ENCODE measurements at regions of chr1 and their contacts with region 1.

Region 1: DNA sequence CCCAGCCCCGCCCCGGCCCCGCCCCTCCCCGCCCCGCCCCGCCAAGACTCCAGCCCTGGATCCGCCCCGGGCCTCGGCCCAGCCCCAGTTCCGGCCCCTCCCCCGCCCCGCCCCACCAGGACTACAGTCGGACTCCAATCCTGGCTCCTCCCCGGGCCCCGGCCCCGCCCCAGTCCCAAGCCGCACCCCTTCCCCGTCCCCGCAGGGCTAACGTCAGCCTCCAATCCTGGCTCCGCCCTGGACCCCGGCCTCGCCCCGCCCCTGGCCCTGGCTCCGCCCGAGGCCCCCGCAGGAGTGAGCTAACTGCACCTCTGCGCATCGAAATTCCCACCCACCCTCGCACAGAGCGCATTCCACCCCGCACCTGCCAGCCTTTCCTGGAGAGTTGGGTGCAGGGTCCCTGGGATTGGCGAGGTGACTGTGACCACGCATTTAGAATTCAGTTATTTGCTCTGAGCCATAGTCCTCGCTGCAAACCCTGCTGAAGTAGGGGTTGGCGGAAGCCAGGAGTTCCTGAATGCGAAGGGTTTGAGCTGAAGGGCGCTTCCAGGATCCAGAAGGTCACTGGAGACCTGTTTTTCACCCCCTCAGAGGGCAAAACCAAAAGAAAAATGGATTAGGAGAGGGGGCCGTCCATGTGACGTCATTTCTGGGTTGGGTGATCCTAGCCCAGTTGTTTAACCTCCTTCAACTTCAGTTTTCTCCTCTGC is 588 bp upstream of the IGSF8 start:
- DNase-seq: peak; percentile 98
- H3K4me3 Mint-ChIP-seq: peak overlapping the region; percentile 86
- H3K27ac Mint-ChIP-seq: peak overlapping the region; percentile 76
- H3K4me1 Mint-ChIP-seq: peaks cover 38% of the 10 kb centered on the region
- H3K27me3 Mint-ChIP-seq: peaks cover 13% of the 10 kb centered on the region
- CTCF ChIP-seq: no peak

Region 2: DNA sequence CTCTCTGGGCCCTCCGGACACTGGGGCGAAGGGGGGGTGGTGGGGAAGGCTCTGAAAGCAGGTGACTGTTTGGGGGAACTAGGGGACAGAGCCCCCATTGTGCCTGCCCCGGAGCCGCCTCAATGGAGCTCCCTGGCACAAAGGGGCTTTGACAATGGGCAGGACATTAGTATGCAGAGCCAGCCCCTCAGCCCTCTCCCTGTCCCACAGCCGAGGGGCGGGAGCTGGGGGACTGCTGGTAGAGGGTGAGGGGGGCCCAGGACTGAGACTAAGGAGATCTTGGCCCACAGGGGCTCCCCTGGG is 36.8 kb before region 1 on chr1:
- CTCF ChIA-PET with region 1: no interaction called
- intact Hi-C with region 1: no loop called
- DNase-seq: no peak
- H3K4me3 Mint-ChIP-seq: no peak overlapping the region
- H3K27ac Mint-ChIP-seq: no peak overlapping the region
- H3K4me1 Mint-ChIP-seq: no peaks in the 10 kb centered on the region
- H3K27me3 Mint-ChIP-seq: peaks cover 62% of the 10 kb centered on the region
- CTCF ChIP-seq: no peak

Region 3: GRCh38 chr1:160078512-160079195 is 20.4 kb before region 1 on chr1:
- CTCF ChIA-PET with region 1: interaction called, 10 read pairs
- intact Hi-C with region 1: no loop called
- DNase-seq: peak; percentile 75
- H3K4me3 Mint-ChIP-seq: no peak overlapping the region
- H3K27ac Mint-ChIP-seq: no peak overlapping the region
- H3K4me1 Mint-ChIP-seq: peaks cover 9% of the 10 kb centered on the region
- H3K27me3 Mint-ChIP-seq: peaks cover 98% of the 10 kb centered on the region
- CTCF ChIP-seq: peak; percentile 93

Region 4: DNA sequence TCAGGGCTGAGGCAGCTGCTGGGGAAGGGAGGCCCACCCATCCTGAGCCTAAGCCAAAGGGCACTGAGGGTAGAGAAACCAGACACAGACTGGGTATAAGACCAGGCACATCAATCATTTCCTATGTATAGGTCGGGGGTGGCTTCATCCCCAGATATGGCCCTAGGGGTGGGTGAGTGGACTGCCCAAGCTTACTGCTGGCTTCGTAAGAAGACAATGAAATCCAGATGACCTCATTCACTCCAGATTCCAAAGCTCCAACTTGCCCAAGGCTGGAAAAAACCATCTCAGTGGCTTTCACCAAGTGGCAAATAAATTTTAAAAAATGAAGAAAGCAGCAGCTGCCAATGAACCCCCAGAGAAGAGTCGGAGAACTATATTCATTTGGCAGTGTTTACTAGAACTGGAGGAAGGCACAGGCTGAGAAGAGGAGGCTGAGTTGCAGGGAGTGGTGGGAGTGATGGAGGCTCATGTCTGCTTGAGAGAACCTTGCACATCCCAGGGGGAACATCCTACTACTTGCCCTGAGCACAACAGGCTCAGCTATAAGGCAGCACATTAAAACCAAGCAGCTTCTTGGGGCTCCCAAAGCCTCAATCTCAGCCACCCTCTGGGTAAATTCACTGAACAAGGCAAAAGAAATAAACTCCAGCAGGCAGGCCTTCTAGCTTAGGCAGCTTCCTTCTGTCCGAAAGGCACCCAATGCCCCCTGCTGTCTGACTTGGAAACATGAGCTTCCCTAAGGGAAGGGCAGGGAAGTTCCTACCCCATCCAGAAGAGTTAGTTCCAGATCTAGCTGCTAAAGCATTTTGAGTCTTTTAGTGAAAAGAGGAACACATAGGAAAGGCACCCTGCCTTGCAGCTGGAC is 120.3 kb after region 1 on chr1:
- CTCF ChIA-PET with region 1: interaction called, 38 read pairs
- intact Hi-C with region 1: loop called (anchors 1 kb)
- DNase-seq: peak; percentile 60
- H3K4me3 Mint-ChIP-seq: no peak overlapping the region
- H3K27ac Mint-ChIP-seq: no peak overlapping the region
- H3K4me1 Mint-ChIP-seq: no peaks in the 10 kb centered on the region
- H3K27me3 Mint-ChIP-seq: no peaks in the 10 kb centered on the region
- CTCF ChIP-seq: peak; percentile 36

Region 5: GRCh38 chr1:160291248-160292220 is 192.5 kb after region 1 on chr1:
- CTCF ChIA-PET with region 1: interaction called, 24 read pairs
- intact Hi-C with region 1: loop called (anchors 1 kb)
- DNase-seq: peak; percentile 75
- H3K4me3 Mint-ChIP-seq: no peak overlapping the region
- H3K27ac Mint-ChIP-seq: no peak overlapping the region
- H3K4me1 Mint-ChIP-seq: peaks cover 6% of the 10 kb centered on the region
- H3K27me3 Mint-ChIP-seq: no peaks in the 10 kb centered on the region
- CTCF ChIP-seq: peak; percentile 85

Region 6: DNA sequence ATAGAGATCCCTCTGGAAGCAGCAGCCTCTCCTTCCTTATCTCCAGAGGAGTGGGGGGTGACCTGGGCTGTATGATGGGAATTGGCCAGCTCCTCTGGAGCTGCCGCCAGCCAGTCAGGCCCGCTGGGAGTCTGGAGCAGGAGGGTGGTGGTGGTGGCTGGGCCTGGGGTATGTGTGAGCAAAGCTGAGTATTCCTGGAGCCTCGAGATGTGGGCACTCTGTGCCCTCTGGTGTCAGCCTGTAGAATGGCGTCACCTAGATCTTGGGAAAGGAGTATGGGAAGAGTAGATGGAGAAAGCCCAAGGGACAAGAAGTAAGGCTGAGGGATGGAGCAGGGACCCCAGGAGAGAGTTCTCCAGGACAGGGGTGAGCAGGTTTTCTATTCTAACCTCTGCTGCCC is 317.4 kb after region 1 on chr1:
- CTCF ChIA-PET with region 1: no interaction called
- intact Hi-C with region 1: loop called (anchors 10 kb)
- DNase-seq: peak; percentile 60
- H3K4me3 Mint-ChIP-seq: no peak overlapping the region
- H3K27ac Mint-ChIP-seq: no peak overlapping the region
- H3K4me1 Mint-ChIP-seq: no peaks in the 10 kb centered on the region
- H3K27me3 Mint-ChIP-seq: peaks cover 72% of the 10 kb centered on the region
- CTCF ChIP-seq: peak; percentile 13